ENCODE measurements at regions of chr1 and their contacts with region 1.

Region 1: GRCh38 chr1:171494076-171494475 is 8.7 kb downstream of the PRRC2C start:
- DNase-seq: no peak
- H3K4me3 ChIP-seq: no peak overlapping the region
- H3K27ac ChIP-seq: no peak overlapping the region
- H3K4me1 ChIP-seq: peaks cover 28% of the 10 kb centered on the region
- CTCF ChIP-seq: no peak

Region 2: DNA sequence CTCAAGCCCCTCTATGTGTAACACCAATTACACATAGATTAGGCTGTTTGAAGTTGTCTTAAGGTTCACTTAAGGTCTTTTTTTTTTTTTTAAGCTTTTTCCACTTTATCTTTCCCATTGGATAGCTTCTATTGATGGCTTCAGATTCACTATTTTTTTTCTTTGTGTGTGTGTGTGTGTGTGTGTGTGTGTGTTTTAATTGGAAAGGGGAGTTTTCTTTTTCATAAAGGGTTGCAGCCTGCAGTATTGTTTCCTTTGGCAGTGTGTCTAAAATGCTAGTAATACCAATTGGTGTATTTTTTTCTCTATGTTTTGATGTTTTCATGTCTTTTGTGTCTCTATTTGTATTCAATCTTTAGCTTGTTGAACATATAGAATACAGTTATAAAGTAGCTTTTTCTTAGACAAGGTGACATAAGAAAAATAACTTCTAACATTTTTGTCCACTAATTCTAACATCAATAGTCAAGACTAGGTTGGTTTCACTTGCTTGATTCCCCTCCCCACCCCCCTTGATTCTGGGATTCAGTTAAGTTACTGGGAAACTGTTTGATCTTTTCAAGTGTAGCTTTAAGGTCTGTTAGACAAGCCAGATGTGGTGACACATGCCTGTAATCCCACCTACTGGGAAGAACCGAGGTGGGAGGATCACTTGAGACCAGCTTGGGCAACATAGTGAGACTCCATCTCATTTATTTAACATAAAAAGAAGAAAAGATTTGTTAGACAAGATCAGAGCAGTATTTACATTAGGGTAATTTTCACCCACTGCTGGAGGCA is 12.6 kb after region 1 on chr1:
- CTCF ChIA-PET with region 1: interaction called, 4 read pairs
- POLR2A ChIA-PET with region 1: interaction called, 16 read pairs
- intact Hi-C with region 1: no loop called
- DNase-seq: no peak
- H3K4me3 ChIP-seq: no peak overlapping the region
- H3K27ac ChIP-seq: no peak overlapping the region
- H3K4me1 ChIP-seq: peaks cover 12% of the 10 kb centered on the region
- CTCF ChIP-seq: no peak

Region 3: GRCh38 chr1:171550050-171550449 is 56.0 kb after region 1 on chr1:
- CTCF ChIA-PET with region 1: no interaction called
- POLR2A ChIA-PET with region 1: no interaction called
- intact Hi-C with region 1: no loop called
- DNase-seq: no peak
- H3K4me3 ChIP-seq: no peak overlapping the region
- H3K27ac ChIP-seq: no peak overlapping the region
- H3K4me1 ChIP-seq: no peaks in the 10 kb centered on the region
- CTCF ChIP-seq: no peak